Activated CD4-positive, alpha-beta T cell treated with anti-CD3 and anti-CD28 coated beads for 36 hours (primary cell): ENCODE measurements at regions of chr10 and their contacts with region 1.

Region 1: GRCh38 chr10:12195603-12196506 is at the starts of genes CDC123 and NUDT5:
- DNase-seq: peak; percentile 94
- ATAC-seq: peak; percentile 94
- H3K4me3 Mint-ChIP-seq: peak within 1 kb of the TSS; percentile 96
- H3K27ac Mint-ChIP-seq: peak within 1 kb of the TSS; percentile 97
- H3K4me1 Mint-ChIP-seq: peaks cover 42% of the 10 kb centered on the region
- H3K27me3 Mint-ChIP-seq: no peaks in the 10 kb centered on the region
- total RNA-seq, gene CDC123: 129 to 151 TPM
- total RNA-seq, gene NUDT5: 99.9 to 108 TPM

Region 2: GRCh38 chr10:12068449-12069269 is 127.2 kb before region 1 on chr10 and contains the start of gene DHTKD1:
- CTCF ChIA-PET with region 1: no interaction called
- POLR2A ChIA-PET with region 1: no interaction called
- intact Hi-C with region 1: loop called (anchors 1 kb)
- DNase-seq: peak; percentile 99
- ATAC-seq: peak; percentile 99
- H3K4me3 Mint-ChIP-seq: peak within 1 kb of the TSS; percentile 81
- H3K27ac Mint-ChIP-seq: peak within 1 kb of the TSS; percentile 93
- H3K4me1 Mint-ChIP-seq: peaks cover 22% of the 10 kb centered on the region
- H3K27me3 Mint-ChIP-seq: no peaks in the 10 kb centered on the region
- total RNA-seq, gene DHTKD1: 13.0 to 15.5 TPM

Region 3: GRCh38 chr10:12181065-12181775 is 14.6 kb before region 1 on chr10:
- CTCF ChIA-PET with region 1: interaction called, 6 read pairs
- POLR2A ChIA-PET with region 1: interaction called, 4 read pairs
- intact Hi-C with region 1: loop called in 1 of 2 experiments (anchors 1 kb)
- DNase-seq: peak; percentile 82
- ATAC-seq: peak; percentile 98
- H3K4me3 Mint-ChIP-seq: no peak overlapping the region
- H3K27ac Mint-ChIP-seq: peak overlapping the region; percentile 80
- H3K4me1 Mint-ChIP-seq: peaks cover 27% of the 10 kb centered on the region
- H3K27me3 Mint-ChIP-seq: no peaks in the 10 kb centered on the region

Region 4: DNA sequence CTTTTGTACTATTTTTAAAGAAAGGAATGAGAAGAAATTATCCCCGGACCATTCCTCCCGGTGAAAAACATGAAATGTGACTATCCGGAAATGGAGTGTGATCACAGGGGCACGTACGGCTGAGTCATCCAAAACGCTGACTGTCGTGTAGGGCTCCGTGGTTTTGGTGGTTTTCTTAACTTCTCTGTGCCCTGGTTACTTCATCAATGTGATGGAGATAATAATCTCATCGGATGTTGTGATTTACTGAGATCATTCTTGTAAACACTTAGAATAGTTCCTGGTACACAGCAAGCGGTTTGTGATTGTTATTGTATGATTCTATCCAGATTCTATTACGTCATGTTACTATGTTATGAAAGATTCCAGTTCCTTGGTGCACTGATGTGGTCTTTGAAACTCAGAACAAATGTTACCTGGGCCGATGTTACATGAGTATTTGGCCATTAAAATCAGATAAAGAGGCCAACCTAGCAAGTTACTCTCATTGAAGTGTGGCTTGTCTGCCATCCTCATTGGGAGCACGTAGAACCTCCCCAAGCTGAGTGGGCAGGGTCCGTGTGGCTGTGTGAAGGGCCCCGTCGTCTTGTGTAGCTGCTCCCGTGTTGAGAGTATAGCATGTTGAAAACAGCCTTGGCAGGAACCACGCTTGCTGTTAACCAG is 253.0 kb after region 1 on chr10:
- CTCF ChIA-PET with region 1: no interaction called
- POLR2A ChIA-PET with region 1: no interaction called
- intact Hi-C with region 1: loop called in 1 of 2 experiments (anchors 5 kb)
- DNase-seq: peak; percentile 86
- ATAC-seq: peak; percentile 94
- H3K4me3 Mint-ChIP-seq: peak overlapping the region; percentile 68
- H3K27ac Mint-ChIP-seq: peak overlapping the region; percentile 92
- H3K4me1 Mint-ChIP-seq: peaks cover 43% of the 10 kb centered on the region
- H3K27me3 Mint-ChIP-seq: no peaks in the 10 kb centered on the region

Region 5: DNA sequence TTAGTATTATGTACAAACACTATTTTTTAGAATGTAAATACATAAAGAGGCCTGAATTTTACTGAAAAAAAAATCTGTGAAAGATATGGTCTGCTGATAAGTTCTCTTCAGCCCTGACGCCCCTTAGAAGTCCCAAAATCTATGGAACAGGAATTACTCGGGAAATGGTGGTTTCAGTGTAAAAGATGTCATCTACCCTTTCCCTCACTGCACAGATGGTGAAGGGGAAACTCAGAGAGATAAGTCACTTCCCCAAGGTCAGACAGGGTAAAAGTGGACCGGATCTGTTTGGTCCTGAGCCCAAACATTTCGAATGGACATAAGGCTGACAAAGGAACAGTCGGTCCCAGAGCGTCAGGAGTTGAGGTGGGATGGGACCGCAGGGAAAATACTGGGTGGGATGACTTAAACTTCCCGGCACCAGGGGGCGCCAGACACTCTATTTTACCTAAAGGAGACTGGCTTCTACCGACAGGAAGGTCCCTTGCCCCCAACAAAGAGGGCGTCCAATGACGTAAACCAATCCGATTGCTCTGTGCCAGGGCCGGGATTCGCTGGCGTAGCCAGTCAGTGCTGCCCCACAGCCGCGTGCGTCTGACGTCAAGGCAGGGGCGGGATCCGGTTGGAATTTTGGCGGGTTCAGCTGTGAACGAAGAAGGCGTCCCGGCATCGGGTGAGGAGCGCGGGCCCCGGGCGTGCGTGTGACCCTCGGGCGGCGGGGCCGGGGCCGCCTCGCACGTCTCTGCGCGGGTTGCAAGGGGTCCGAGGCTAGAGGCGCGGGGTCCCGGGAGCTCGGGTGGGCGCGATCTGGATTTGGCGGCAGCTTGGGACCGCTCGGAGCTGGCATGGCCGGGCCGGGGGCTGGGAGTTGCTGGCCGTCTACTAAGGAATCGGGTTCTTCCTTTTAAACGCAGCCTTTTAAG is 965.3 kb after region 1 on chr10 and contains the start of gene MCM10:
- CTCF ChIA-PET with region 1: no interaction called
- POLR2A ChIA-PET with region 1: no interaction called
- intact Hi-C with region 1: loop called in 1 of 2 experiments (anchors 1 kb)
- DNase-seq: peak; percentile 98
- ATAC-seq: peak; percentile 100
- H3K4me3 Mint-ChIP-seq: peak within 1 kb of the TSS; percentile 91
- H3K27ac Mint-ChIP-seq: peak within 1 kb of the TSS; percentile 86
- H3K4me1 Mint-ChIP-seq: peaks cover 26% of the 10 kb centered on the region
- H3K27me3 Mint-ChIP-seq: no peaks in the 10 kb centered on the region
- total RNA-seq, gene MCM10: 86.0 to 86.2 TPM

Region 6: GRCh38 chr10:13291821-13292773 is 1096.2 kb after region 1 on chr10:
- CTCF ChIA-PET with region 1: no interaction called
- POLR2A ChIA-PET with region 1: no interaction called
- intact Hi-C with region 1: no loop called
- DNase-seq: no peak
- ATAC-seq: no peak
- H3K4me3 Mint-ChIP-seq: no peak overlapping the region
- H3K27ac Mint-ChIP-seq: no peak overlapping the region
- H3K4me1 Mint-ChIP-seq: peaks cover 6% of the 10 kb centered on the region
- H3K27me3 Mint-ChIP-seq: no peaks in the 10 kb centered on the region

Region 7: DNA sequence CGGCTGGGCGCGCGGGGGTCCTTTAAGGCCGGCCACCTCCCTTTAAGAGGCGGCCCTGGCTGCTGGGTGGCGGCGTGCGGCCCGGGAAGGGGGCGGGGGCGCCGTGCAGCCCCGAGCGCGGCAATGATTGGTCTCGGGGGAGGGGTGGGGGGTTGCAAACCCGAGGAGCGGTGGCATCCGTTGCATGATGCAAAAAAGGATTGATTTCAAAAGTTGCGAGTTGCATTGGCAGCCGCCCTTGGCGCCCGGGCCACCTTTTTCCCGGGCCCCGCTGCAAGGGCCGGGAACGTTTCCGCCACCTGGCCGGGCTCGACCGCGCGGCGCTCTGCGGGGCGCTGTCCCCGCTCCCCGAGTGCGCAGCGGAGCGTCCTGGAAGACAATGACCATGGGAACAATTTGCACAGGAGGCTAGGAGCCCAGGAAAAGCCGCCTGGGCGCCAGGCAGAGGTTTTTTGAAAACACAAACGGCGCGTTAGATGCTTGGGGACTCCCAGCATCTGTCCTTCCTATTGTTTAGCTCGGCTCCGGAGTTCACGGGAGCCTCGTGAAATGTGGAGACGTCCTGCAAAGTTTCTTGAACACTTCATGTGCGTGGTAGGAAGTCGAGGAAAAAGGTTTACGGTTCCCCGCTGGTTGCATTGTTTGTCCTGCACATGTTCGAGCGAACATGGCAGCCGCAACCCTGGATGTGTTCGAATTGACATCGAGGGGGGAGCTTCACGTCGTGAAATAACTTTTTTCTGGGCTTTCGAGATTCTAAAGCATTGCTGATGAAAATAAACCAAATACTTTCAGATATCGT is 1152.6 kb after region 1 on chr10 and contains the start of gene SEPHS1:
- CTCF ChIA-PET with region 1: no interaction called
- POLR2A ChIA-PET with region 1: no interaction called
- intact Hi-C with region 1: loop called in 1 of 2 experiments (anchors 2 kb)
- DNase-seq: peak; percentile 93
- ATAC-seq: peak; percentile 77
- H3K4me3 Mint-ChIP-seq: peak within 1 kb of the TSS; percentile 87
- H3K27ac Mint-ChIP-seq: peak within 1 kb of the TSS; percentile 95
- H3K4me1 Mint-ChIP-seq: peaks cover 57% of the 10 kb centered on the region
- H3K27me3 Mint-ChIP-seq: no peaks in the 10 kb centered on the region
- total RNA-seq, gene SEPHS1: 74.5 to 74.7 TPM